ENCODE measurements at regions of chr22 and their contacts with region 1.

Region 1: GRCh38 chr22:49880281-49880680 is 26.6 kb downstream of the ZBED4 start:
- DNase-seq: no peak
- ATAC-seq: no peak
- H3K4me3 Mint-ChIP-seq: no peak overlapping the region
- H3K27ac Mint-ChIP-seq: no peak overlapping the region
- H3K4me1 Mint-ChIP-seq: peaks cover 16% of the 10 kb centered on the region
- H3K27me3 Mint-ChIP-seq: no peaks in the 10 kb centered on the region
- CTCF ChIP-seq: no peak

Region 2: GRCh38 chr22:49749885-49750772 is 130.2 kb before region 1 on chr22:
- CTCF ChIA-PET with region 1: no interaction called
- POLR2A ChIA-PET with region 1: no interaction called
- intact Hi-C with region 1: no loop called
- DNase-seq: peak; percentile 11
- ATAC-seq: no peak
- H3K4me3 Mint-ChIP-seq: no peak overlapping the region
- H3K27ac Mint-ChIP-seq: no peak overlapping the region
- H3K4me1 Mint-ChIP-seq: no peaks in the 10 kb centered on the region
- H3K27me3 Mint-ChIP-seq: no peaks in the 10 kb centered on the region
- CTCF ChIP-seq: no peak

Region 3: DNA sequence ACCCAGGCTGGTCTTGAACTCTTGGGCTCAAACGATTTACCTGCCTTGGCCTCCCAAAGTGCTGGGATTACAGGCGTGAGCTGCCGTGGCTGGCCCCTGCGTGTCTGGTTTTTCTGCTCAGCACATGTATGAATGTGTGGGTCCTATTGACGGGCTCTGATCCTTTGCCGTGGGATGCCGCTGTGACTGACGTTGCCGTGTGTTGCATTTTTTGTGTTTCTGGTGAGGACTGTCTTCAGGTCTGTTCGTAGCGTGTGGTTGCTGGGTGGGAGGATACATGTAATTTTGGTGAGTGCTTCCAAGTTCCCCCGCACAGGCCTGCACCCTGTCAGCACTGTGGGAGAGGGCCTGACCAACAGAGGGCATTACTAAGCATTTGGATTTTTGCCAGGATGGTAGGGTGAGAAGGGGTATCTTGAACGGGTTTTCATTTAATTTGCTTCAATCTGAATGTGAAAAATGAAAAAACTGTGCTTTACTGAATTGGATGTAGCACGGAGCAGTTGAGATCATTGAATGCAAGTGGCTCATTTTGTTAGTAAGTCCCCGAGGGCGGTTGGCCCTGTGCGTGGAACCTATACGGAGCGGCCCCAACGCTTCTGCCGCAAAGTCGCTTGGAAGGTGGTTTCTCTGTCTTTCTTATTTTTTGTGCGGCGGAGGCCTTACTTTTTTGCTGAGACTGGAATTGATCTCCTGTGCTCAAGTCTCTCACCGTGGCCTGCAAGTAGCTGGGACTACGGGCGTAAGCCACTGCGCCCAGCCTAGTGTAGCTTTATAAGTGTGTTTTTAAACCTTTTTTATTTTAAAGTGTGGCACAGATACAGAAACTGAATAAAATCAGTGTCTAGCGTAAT is 18.4 kb before region 1 on chr22:
- CTCF ChIA-PET with region 1: no interaction called
- POLR2A ChIA-PET with region 1: interaction called, 11 read pairs
- intact Hi-C with region 1: no loop called
- DNase-seq: no peak
- ATAC-seq: no peak
- H3K4me3 Mint-ChIP-seq: no peak overlapping the region
- H3K27ac Mint-ChIP-seq: no peak overlapping the region
- H3K4me1 Mint-ChIP-seq: peaks cover 29% of the 10 kb centered on the region
- H3K27me3 Mint-ChIP-seq: no peaks in the 10 kb centered on the region
- CTCF ChIP-seq: no peak

Measured in activated B cell treated with CpG ODN at 0.5 μM for 24 hours (primary cell).